BJ (cell line): ENCODE measurements at regions of chr1 and their contacts with region 1.

Region 1: DNA sequence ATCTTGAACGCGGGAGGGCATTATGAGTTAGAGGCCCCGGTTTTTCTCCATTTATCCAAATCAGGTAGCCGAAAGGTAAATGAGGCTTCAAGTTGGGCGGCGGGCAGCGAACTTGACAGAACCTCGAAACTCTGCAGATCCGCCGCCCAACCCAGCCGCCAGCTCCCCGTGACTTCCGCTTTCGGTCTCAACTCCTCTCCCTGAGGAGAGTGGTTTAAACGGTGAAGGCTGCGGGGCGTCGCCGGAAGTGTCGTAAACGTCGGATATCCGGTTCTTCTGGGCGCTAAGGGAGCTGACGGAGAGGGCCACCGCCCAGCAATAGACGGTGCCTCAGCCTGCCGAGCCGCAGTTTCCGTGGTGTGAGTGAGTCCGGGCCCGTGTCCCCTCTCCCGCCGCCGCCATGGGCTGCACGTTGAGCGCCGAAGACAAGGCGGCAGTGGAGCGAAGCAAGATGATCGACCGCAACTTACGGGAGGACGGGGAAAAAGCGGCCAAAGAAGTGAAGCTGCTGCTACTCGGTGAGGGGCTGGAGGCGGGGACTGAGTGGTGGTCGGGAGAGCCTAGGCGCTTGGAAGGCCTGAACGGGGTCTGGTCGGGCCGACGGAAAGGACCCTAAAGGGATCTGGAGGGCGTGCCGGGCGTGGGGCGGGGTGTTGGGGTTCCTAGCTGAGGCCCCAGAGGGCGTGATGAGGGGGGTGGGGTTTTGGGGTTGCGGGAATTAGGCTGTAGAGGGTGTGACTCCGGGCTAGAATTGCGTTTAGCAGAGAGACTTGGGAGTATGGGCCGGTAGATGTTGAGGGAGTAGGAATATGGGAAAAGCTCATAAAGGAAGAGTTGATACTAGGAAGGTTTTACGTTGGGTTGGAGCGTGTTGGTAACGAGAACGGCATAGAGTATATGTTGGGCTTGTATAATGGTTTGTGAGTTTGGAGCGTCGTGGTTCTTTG is at the start of gene GNAI3:
- DNase-seq: peak; percentile 70
- H3K4me3 ChIP-seq: peak within 1 kb of the TSS; percentile 98
- H3K27me3 ChIP-seq: no peaks in the 10 kb centered on the region
- CTCF ChIP-seq: no peak
- polyA plus RNA-seq, gene GNAI3: 4.7 and 9.6 TPM in 2 replicates

Region 2: DNA sequence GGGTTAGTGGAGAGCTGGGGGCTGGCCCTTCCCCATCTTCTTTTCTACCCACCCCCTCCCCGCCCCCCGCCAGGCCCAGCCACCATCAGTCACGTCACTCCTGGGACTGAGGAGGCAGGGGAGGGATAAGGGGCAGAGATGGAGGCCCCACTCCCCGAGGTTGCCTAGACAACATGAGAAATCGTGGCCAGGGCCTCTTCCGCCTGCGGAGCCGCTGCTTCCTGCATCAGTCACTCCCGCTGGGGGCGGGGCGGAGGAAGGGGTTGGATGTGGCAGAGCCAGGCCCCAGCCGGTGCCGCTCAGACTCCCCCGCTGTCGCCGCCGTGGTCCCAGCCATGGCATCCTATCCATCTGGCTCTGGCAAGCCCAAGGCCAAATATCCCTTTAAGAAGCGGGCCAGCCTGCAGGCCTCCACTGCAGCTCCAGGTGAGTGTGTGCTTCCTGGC is 72.3 kb after region 1 on chr1:
- CTCF ChIA-PET with region 1: interaction called, 19 read pairs
- POLR2A ChIA-PET with region 1: interaction called, 6 read pairs
- DNase-seq: peak; percentile 71
- H3K4me3 ChIP-seq: peak overlapping the region; percentile 83
- H3K27me3 ChIP-seq: no peaks in the 10 kb centered on the region
- CTCF ChIP-seq: no peak

Region 3: DNA sequence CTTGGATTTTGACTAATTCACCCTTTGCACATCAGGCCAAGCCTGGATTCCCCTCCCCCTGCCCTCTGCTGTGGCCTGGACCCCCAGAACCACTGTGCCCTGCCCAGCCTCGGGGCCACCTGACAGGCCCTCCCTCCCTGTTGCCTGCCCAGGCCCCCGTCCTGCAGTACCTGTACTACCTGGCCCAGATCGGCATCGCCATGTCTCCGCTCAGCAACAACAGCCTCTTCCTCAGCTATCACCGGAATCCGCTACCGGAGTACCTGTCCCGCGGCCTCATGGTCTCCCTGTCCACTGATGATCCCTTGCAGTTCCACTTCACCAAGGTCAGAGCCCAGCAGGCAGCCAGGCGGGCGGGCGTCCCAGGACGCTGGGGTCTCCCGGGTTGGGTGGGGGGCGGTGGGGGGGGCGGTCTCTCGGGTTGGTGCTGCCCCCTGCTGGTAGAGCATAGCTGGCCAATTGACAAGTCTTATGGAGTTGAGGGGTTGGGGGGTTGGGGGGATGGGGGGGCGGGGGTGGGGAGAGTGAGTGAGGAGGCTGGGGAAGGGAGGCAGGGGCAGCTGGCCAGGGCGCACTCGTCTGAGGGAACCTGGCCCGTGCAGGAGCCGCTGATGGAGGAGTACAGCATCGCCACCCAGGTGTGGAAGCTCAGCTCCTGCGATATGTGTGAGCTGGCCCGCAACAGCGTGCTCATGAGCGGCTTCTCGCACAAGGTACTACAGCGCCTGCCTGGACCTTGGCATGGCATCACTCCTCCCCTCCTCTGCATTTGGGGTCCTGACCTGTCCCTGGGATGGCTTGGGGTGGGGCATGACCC is 81.7 kb after region 1 on chr1:
- CTCF ChIA-PET with region 1: interaction called, 114 read pairs
- POLR2A ChIA-PET with region 1: interaction called, 3 read pairs
- DNase-seq: no peak
- H3K4me3 ChIP-seq: no peak overlapping the region
- H3K27me3 ChIP-seq: no peaks in the 10 kb centered on the region
- CTCF ChIP-seq: peak; percentile 21

Region 4: GRCh38 chr1:109649491-109649914 is 100.9 kb after region 1 on chr1:
- CTCF ChIA-PET with region 1: interaction called, 82 read pairs
- POLR2A ChIA-PET with region 1: interaction called, 3 read pairs
- DNase-seq: no peak
- H3K4me3 ChIP-seq: peak overlapping the region; percentile 34
- H3K27me3 ChIP-seq: peaks cover 2% of the 10 kb centered on the region; the same call in 1 of the 2 replicates
- CTCF ChIP-seq: peak; percentile 60